Thyroid gland (tissue), 4 donors: ENCODE measurements at regions of chr17 and their contacts with region 1.

Region 1: GRCh38 chr17:43316522-43317142 is 82.2 kb upstream of the ARL4D start:
- DNase-seq: peak in 1 of 2 donors; percentile 13
- H3K4me3 ChIP-seq: no peak overlapping the region
- H3K27ac ChIP-seq: no peak overlapping the region
- H3K4me1 ChIP-seq: no peaks in the 10 kb centered on the region
- H3K27me3 ChIP-seq: no peaks in the 10 kb centered on the region
- CTCF ChIP-seq: no peak
- POLR2A ChIP-seq: no peak

Region 2: DNA sequence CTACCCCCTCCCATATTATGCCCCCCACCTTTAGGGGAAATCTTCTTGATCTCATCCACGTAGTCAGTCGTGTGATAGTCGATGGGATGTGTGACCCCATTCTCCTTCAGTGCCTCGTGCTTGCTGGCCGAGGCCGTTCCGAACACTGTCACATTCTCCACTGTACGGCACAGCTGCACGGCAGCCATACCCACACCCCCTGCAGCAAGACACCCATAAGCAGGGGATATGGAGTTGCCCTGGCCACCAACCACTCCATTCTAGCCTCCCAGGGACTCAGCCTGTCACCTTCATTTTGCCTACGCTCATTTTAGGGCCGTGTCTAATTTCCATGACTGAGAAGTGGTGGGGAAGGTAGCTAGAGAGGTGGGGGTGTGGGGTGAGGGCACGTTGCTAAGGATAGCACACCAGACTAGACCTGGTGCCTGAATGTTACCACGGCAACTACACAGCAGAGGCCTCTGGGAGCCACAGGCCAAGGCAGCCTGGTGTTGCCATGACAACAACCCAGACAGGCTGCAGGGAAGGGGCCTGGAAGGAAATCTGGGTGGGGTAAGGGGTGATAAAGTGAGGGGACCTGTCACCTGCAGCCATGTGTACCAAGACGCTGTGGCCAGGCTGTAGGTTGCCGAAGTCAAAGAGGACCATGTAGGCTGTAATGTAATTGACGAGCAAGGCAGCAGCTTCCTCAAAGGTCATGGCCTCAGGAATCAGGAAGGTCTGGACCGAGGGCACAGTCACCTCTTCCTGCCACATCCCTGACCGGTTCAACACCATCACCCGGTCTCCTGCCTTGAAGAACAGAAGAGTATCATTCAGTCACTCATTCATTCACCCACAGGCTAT is 298.4 kb before region 1 on chr17:
- intact Hi-C with region 1: loop called (anchors 10 kb)
- DNase-seq: no peak
- H3K4me3 ChIP-seq: no peak overlapping the region
- H3K27ac ChIP-seq: no peak overlapping the region
- H3K4me1 ChIP-seq: peaks cover 2 to 55% of the 10 kb centered on the region in 2 donors
- H3K27me3 ChIP-seq: no peaks in the 10 kb centered on the region
- CTCF ChIP-seq: no peak
- POLR2A ChIP-seq: no peak

Region 3: DNA sequence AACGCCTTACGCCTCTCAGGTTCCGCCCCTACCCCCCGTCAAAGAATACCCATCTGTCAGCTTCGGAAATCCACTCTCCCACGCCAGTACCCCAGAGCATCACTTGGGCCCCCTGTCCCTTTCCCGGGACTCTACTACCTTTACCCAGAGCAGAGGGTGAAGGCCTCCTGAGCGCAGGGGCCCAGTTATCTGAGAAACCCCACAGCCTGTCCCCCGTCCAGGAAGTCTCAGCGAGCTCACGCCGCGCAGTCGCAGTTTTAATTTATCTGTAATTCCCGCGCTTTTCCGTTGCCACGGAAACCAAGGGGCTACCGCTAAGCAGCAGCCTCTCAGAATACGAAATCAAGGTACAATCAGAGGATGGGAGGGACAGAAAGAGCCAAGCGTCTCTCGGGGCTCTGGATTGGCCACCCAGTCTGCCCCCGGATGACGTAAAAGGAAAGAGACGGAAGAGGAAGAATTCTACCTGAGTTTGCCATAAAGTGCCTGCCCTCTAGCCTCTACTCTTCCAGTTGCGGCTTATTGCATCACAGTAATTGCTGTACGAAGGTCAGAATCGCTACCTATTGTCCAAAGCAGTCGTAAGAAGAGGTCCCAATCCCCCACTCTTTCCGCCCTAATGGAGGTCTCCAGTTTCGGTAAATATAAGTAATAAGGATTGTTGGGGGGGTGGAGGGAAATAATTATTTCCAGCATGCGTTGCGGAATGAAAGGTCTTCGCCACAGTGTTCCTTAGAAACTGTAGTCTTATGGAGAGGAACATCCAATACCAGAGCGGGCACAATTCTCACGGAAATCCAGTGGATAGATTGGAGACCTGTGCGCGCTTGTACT is 191.3 kb before region 1 on chr17 and contains the start of gene BRCA1:
- intact Hi-C with region 1: no loop called
- DNase-seq: peak; percentile 95
- H3K4me3 ChIP-seq: peak within 1 kb of the TSS; percentile 29 to 68 (median 59)
- H3K27ac ChIP-seq: peak within 1 kb of the TSS; percentile 32 to 73 (median 65)
- H3K4me1 ChIP-seq: peaks cover 13 to 18% of the 10 kb centered on the region in 2 donors
- H3K27me3 ChIP-seq: no peaks in the 10 kb centered on the region
- CTCF ChIP-seq: no peak
- POLR2A ChIP-seq: peak in 1 of 2 donors; percentile 60
- total RNA-seq, gene BRCA1: 14.4 to 31.9 (median 25.4) TPM

Region 4: GRCh38 chr17:43226393-43226792 is 90.2 kb before region 1 on chr17:
- intact Hi-C with region 1: no loop called
- DNase-seq: no peak
- H3K4me3 ChIP-seq: no peak overlapping the region
- H3K27ac ChIP-seq: no peak overlapping the region
- H3K4me1 ChIP-seq: no peaks in the 10 kb centered on the region
- H3K27me3 ChIP-seq: no peaks in the 10 kb centered on the region
- CTCF ChIP-seq: no peak
- POLR2A ChIP-seq: no peak

Region 5: DNA sequence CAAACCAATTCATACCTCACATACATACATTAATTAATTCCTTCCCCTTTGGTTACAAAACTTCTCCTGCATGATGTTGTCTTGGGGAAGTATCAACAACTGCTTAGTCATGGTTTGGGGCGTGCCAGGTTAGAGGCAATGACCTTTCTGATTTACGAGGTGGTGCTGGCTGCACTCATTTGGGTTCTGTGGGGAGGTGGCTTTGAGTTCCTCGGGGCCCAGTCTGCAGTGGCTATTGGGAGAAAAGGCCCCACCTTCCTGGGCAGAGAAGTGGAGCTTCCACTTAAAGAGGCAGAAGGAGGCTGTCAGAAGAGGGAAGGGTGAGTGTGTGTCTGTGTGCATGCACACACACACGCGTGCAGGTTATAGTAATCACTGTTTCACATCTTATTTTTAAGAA is 239.7 kb after region 1 on chr17:
- intact Hi-C with region 1: no loop called
- DNase-seq: peak; percentile 33 to 52
- H3K4me3 ChIP-seq: no peak overlapping the region
- H3K27ac ChIP-seq: no peak overlapping the region
- H3K4me1 ChIP-seq: peaks cover 0 to 8% of the 10 kb centered on the region in 2 donors
- H3K27me3 ChIP-seq: no peaks in the 10 kb centered on the region
- CTCF ChIP-seq: no peak
- POLR2A ChIP-seq: no peak

Region 6: GRCh38 chr17:43966271-43966670 is 649.6 kb after region 1 on chr17:
- intact Hi-C with region 1: no loop called
- DNase-seq: no peak
- H3K4me3 ChIP-seq: no peak overlapping the region
- H3K27ac ChIP-seq: no peak overlapping the region
- H3K4me1 ChIP-seq: peaks cover 3 to 4% of the 10 kb centered on the region in 2 donors
- H3K27me3 ChIP-seq: no peaks in the 10 kb centered on the region
- CTCF ChIP-seq: no peak
- POLR2A ChIP-seq: no peak